ENCODE measurements at regions of chr16 and their contacts with region 1.

Region 1: DNA sequence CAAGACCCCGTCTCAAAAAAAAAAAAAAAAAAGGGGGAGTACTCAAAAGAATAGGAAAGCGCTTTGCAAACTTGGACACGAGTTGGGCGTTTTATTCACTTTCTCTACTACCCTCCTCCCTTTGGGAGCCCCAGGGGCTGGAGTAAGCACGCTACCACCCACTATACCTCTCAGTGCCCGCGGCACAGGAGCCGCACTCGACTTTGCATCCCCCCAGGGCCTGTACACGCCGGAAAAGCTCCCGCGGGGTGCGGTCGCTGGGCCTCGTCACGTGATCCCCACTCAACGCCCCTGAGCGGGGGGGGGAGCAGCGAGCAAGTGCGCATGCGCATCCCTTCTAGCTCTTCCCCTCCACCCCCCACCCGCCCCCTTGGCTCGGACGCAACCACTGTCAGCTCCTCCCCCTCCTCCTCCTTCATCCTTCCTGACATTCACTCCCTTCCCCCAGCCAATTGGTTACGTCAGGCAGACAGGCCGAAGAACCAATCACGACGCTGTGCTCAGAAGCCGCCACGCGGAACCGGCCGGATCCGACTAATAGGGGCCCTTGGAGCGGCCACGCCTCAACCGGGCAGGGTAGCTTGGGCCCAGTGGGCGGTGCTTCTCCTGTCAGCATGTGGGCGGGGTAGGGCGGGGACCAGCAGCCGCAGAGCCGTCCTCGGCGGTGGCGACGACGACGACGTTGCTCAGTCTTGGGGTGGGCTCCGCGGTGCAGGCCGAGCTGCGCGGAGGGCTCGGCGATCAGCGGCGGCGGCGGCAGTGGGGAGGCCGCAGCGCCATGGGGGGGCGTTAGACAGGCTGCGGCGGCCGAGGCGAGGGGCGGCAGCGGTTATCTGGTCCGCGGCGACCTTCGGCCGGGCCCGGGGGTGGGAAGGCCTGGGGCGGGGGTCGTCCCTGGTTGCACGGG is at the start of gene HAPSTR1:
- DNase-seq: peak; percentile 100
- ATAC-seq: peak; percentile 90
- H3K4me3 Mint-ChIP-seq: peak within 1 kb of the TSS; percentile 89
- H3K27ac Mint-ChIP-seq: peak within 1 kb of the TSS; percentile 97
- H3K4me1 Mint-ChIP-seq: peaks cover 25% of the 10 kb centered on the region
- H3K27me3 Mint-ChIP-seq: no peaks in the 10 kb centered on the region
- total RNA-seq, gene HAPSTR1: 52.3 to 63.8 TPM

Region 2: DNA sequence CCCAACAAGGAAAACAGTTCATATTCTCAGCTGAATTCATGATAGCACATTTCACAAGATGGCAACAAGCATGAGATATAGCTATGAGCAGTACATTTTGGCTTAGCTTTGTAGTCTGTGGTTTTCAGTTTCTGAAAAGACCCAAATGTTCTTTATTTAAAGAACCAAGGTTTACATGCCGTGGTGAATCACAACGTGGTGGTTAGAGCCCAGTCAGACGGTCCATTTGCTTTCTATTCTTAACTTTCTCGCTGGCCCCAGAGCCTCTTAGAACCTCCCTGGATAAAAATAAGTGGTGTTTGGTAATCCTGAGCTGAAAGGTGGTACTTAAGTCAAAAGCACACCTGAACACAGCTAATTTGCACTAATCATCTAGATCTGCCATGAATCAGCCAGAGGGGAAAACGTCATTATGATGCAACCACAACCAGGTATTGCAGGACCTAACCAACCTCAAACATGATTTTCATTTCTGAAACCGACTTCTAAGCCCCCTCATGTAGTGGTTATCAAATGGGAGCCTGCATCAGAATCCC is 18.3 kb before region 1 on chr16:
- CTCF ChIA-PET with region 1: interaction called, 22 read pairs
- DNase-seq: peak; percentile 62
- ATAC-seq: peak; percentile 51
- H3K4me3 Mint-ChIP-seq: peak overlapping the region; percentile 24
- H3K27ac Mint-ChIP-seq: peak overlapping the region; percentile 91
- H3K4me1 Mint-ChIP-seq: peaks cover 41% of the 10 kb centered on the region
- H3K27me3 Mint-ChIP-seq: no peaks in the 10 kb centered on the region

Region 3: GRCh38 chr16:9102379-9102778 is 11.2 kb after region 1 on chr16:
- CTCF ChIA-PET with region 1: interaction called, 22 read pairs
- DNase-seq: peak; percentile 21
- ATAC-seq: peak; percentile 2
- H3K4me3 Mint-ChIP-seq: peak overlapping the region; percentile 68
- H3K27ac Mint-ChIP-seq: peak overlapping the region; percentile 90
- H3K4me1 Mint-ChIP-seq: peaks cover 92% of the 10 kb centered on the region
- H3K27me3 Mint-ChIP-seq: no peaks in the 10 kb centered on the region

Measured in activated CD8-positive, alpha-beta memory T cell treated with anti-CD3 and anti-CD28 coated beads, Interleukin-2, amount 10 ng/mL, durations not matched to agents 7 days and 5 days (primary cell).